Transverse colon (tissue), 4 donors: ENCODE measurements at regions of chr11 and their contacts with region 1.

Region 1: GRCh38 chr11:85619497-85619896 is 7.6 kb downstream of the DLG2 start:
- DNase-seq: no peak
- H3K4me3 ChIP-seq: no peak overlapping the region
- H3K27ac ChIP-seq: no peak overlapping the region
- H3K4me1 ChIP-seq: no peaks in the 10 kb centered on the region
- H3K27me3 ChIP-seq: no peaks in the 10 kb centered on the region
- CTCF ChIP-seq: no peak
- EP300 ChIP-seq: no peak
- POLR2A ChIP-seq: no peak

Region 2: GRCh38 chr11:85826116-85826855 is 206.8 kb after region 1 on chr11:
- in situ Hi-C with region 1: loop called in 1 of 4 experiments (anchors 25 kb)
- intact Hi-C with region 1: no loop called
- DNase-seq: peak; percentile 41
- H3K4me3 ChIP-seq: no peak overlapping the region
- H3K27ac ChIP-seq: peak overlapping the region; percentile 4 to 56 (median 20)
- H3K4me1 ChIP-seq: peaks cover 17 to 51% (median 30%) of the 10 kb centered on the region in 4 donors
- H3K27me3 ChIP-seq: no peaks in the 10 kb centered on the region
- CTCF ChIP-seq: peak; percentile 41 to 57 (median 54)
- EP300 ChIP-seq: no peak
- POLR2A ChIP-seq: no peak